ENCODE measurements at regions of chr14 and their contacts with region 1.

Region 1: DNA sequence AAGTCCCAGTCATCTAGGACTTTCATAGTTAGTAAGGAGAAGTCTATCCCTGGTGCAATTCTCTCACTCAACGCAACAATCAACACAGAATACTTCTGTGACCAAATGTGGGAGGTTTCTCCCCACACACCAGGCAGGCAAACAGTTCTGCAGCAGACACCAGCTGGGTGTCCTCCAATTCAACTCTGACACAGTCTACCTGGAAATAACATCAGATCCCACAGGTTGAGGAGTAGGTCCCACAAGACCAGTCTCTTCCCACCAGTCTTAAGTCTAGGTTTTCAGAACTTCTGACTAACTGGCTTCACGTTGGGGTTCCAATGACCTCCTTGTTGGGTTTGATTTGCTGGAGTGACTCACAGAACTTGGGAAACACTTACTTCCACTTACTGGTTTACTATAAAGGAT is 14.8 kb downstream of the ACOT6 start:
- DNase-seq: no peak
- ATAC-seq: no peak
- H3K4me3 ChIP-seq: no peak overlapping the region
- H3K27ac ChIP-seq: no peak overlapping the region
- H3K4me1 ChIP-seq: no peaks in the 10 kb centered on the region
- H3K27me3 ChIP-seq: no peaks in the 10 kb centered on the region

Region 2: DNA sequence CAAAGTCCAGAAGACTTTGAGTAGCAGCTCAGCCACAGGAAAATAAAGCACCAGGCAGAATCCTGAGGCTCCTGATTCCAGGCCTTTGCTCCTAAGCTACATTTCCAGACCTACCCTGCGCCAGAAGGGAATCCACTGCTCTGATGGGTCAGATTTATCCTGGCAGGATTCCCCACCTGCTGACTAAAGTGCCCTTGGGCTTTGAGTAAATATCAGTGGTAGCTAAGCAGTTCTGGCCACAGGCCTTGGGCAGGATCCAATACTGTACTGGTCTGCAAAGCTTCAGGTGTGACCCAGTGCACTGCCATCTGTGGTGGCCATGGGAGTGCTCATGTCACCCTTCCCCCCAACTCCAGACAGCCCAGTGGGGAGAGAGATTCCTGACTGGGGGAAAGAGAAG is 100.6 kb before region 1 on chr14:
- intact Hi-C with region 1: loop called in 1 of 4 experiments (anchors 10 kb)
- DNase-seq: peak in 1 of 3 donors; percentile 34
- ATAC-seq: peak; percentile 67 to 69
- H3K4me3 ChIP-seq: no peak overlapping the region
- H3K27ac ChIP-seq: no peak overlapping the region
- H3K4me1 ChIP-seq: peaks cover 3% of the 10 kb centered on the region
- H3K27me3 ChIP-seq: no peaks in the 10 kb centered on the region

Measured in right cardiac atrium (tissue), 5 donors.